ENCODE measurements at regions of chr16 and their contacts with region 1.

Region 1: GRCh38 chr16:4271176-4272066 is 1.4 kb downstream of the TFAP4 start:
- DNase-seq: peak; percentile 74 to 93 (median 86)
- ATAC-seq: peak; percentile 81
- H3K4me3 ChIP-seq: peak overlapping the region; percentile 100
- H3K4me3 Mint-ChIP-seq: peak overlapping the region; percentile 89
- H3K27ac ChIP-seq: peak overlapping the region; percentile 68 to 72
- H3K27ac Mint-ChIP-seq: peak overlapping the region; percentile 97
- H3K4me1 ChIP-seq: peaks cover 25% of the 10 kb centered on the region
- H3K4me1 Mint-ChIP-seq: peaks cover 11% of the 10 kb centered on the region
- H3K27me3 ChIP-seq: no peaks in the 10 kb centered on the region
- H3K27me3 Mint-ChIP-seq: peaks cover 5% of the 10 kb centered on the region
- CTCF ChIP-seq: no peak

Region 2: DNA sequence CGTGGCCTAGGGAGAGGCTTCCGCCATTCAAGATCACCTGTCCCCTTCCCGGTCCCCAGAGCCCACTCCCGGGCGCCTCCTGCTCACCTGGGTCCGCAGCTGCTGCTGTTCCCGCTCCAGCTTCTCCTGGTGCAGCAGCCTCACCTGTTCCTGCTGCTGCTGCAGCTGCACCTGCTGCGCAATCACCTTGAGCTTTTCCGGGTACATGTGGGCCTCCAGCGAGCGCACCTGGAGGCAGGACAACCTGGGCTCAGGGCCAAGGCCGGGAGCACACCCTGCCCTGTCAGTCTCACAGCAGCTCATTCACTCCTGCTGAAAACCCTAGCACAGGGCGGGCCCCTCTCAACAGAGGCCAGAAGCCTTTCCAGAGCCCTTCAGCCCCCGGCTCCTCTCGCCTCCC is 11.1 kb before region 1 on chr16:
- CTCF ChIA-PET with region 1: interaction called, 5 read pairs
- POLR2A ChIA-PET with region 1: interaction called, 179 read pairs
- intact Hi-C with region 1: no loop called
- DNase-seq: no peak
- ATAC-seq: no peak
- H3K4me3 ChIP-seq: no peak overlapping the region
- H3K4me3 Mint-ChIP-seq: no peak overlapping the region
- H3K27ac ChIP-seq: no peak overlapping the region
- H3K27ac Mint-ChIP-seq: no peak overlapping the region
- H3K4me1 ChIP-seq: peaks cover 2% of the 10 kb centered on the region
- H3K4me1 Mint-ChIP-seq: peaks cover 8% of the 10 kb centered on the region
- H3K27me3 ChIP-seq: no peaks in the 10 kb centered on the region
- H3K27me3 Mint-ChIP-seq: no peaks in the 10 kb centered on the region
- CTCF ChIP-seq: no peak

Region 3: DNA sequence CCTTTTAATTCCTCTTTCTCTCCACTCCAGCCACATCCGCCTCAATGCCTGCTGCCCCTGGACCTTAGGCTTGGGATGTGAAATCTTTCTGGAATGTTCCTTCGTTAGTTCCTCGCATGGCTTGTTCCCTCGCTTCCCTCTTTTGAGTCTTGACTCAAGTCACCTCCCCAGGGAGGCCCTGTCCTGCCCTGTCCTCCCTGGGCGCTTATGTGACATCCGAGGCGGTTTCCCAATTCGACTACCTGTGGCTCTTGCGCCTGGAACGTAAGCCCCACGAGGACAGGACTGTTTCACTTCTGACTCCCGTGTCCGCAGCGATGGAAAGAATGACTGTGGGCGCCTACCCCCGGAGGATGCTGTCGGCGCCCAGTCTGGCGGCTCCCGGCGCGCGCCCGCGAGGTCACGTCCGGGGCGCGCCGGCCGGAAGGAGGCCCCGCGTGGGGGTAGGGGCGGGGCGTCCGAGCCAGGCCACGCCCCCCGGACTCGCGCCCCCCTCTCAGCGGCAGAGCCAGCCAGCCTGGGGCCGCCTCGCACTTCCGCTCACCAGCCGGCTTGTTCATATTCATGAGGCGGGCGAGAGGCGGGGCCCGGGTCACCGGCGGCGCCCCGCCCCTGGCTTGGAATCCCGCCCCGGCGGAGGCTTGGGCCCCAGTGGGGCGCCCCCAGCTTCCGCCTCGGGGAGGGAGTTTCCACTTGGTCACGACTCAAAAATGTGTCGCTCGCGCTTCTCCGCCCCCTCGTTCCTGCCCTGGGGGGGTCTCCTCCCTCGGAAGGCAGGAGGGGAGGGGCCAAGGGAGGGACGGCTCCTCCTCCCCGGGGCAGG is 36.0 kb after region 1 on chr16:
- CTCF ChIA-PET with region 1: interaction called, 12 read pairs
- POLR2A ChIA-PET with region 1: interaction called, 48 read pairs
- intact Hi-C with region 1: loop called (anchors 2 to 5 kb)
- DNase-seq: peak; percentile 91 to 99 (median 96)
- ATAC-seq: peak; percentile 87
- H3K4me3 ChIP-seq: peak overlapping the region; percentile 72
- H3K4me3 Mint-ChIP-seq: peak overlapping the region; percentile 84
- H3K27ac ChIP-seq: peak overlapping the region; percentile 82 to 90
- H3K27ac Mint-ChIP-seq: peak overlapping the region; percentile 96
- H3K4me1 ChIP-seq: peaks cover 31% of the 10 kb centered on the region
- H3K4me1 Mint-ChIP-seq: peaks cover 15% of the 10 kb centered on the region
- H3K27me3 ChIP-seq: no peaks in the 10 kb centered on the region
- H3K27me3 Mint-ChIP-seq: no peaks in the 10 kb centered on the region
- CTCF ChIP-seq: no peak

Region 4: DNA sequence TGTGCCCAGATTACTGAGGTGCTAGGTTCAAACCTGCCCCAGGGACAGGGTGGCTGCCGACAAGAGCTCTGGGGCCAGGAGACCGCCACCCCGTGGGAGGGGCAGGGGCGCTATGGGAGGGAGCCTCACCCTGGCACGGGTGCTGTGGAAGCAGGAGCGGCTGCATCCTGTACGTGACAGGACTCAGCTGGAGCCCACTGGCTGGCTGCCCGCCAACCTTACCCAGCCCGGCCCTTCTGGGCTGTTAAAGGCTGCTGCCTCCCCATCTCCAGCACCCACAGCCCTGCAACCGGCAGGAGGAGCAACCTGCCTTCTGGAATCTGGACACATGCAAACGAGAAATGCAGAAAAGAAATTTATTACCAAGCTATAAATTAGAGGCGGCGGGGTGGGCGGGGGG is 68.5 kb after region 1 on chr16:
- CTCF ChIA-PET with region 1: no interaction called
- POLR2A ChIA-PET with region 1: no interaction called
- intact Hi-C with region 1: no loop called
- DNase-seq: no peak
- ATAC-seq: no peak
- H3K4me3 ChIP-seq: no peak overlapping the region
- H3K4me3 Mint-ChIP-seq: no peak overlapping the region
- H3K27ac ChIP-seq: no peak overlapping the region
- H3K27ac Mint-ChIP-seq: no peak overlapping the region
- H3K4me1 ChIP-seq: peaks cover 13% of the 10 kb centered on the region
- H3K4me1 Mint-ChIP-seq: peaks cover 3% of the 10 kb centered on the region
- H3K27me3 ChIP-seq: no peaks in the 10 kb centered on the region
- H3K27me3 Mint-ChIP-seq: no peaks in the 10 kb centered on the region
- CTCF ChIP-seq: no peak

Region 5: GRCh38 chr16:4350787-4351659 is 79.6 kb after region 1 on chr16 and contains the start of gene PAM16:
- CTCF ChIA-PET with region 1: no interaction called
- POLR2A ChIA-PET with region 1: interaction called, 10 read pairs
- intact Hi-C with region 1: loop called in 1 of 2 experiments (anchors 5 kb)
- DNase-seq: peak; percentile 95 to 100 (median 97)
- ATAC-seq: peak; percentile 85
- H3K4me3 ChIP-seq: peak within 1 kb of the TSS; percentile 96
- H3K4me3 Mint-ChIP-seq: peak within 1 kb of the TSS; percentile 98
- H3K27ac ChIP-seq: peak within 1 kb of the TSS; percentile 69 to 71
- H3K27ac Mint-ChIP-seq: peak within 1 kb of the TSS; percentile 94
- H3K4me1 ChIP-seq: peaks cover 42% of the 10 kb centered on the region
- H3K4me1 Mint-ChIP-seq: peaks cover 27% of the 10 kb centered on the region
- H3K27me3 ChIP-seq: no peaks in the 10 kb centered on the region
- H3K27me3 Mint-ChIP-seq: no peaks in the 10 kb centered on the region
- CTCF ChIP-seq: no peak
- total RNA-seq, gene PAM16: 24.9 to 26.8 TPM

Region 6: DNA sequence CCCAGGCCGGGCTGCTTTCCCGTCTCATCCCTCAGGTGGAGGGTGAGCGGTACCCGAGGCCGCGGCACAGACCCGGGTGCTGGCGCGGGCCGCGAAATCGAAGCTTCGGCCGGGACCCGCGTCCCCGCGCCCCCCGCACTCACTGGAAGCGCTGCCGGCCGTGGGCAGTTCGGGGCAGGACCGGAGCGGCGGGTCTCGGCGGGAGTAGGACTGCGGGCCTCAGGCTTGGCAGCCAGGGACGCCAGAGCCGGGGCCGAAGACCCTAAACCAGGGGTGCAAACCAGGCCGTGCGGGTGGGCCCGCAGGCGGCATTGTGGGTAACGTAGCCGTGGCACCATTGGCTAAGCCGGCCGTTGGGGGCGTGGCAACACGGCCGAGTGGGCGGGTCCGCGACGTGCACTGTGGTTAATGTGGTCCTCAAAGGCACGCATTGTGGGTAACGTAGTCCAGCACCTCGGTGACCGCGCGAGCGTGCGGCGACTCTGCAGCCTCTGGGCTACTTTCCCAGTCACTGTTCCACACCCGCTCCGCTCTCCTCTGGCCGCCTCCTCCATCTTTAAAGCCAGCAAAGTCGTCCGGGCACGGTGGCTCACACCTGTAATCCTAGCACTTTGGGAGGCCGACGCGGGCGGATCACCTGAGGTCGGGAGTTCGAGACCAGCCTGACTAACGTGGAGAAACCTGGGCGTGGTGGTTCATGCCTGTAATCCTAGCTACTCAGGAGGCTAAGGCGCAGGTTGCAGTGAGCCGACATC is 495.6 kb after region 1 on chr16 and contains the start of gene ZNF500:
- CTCF ChIA-PET with region 1: no interaction called
- POLR2A ChIA-PET with region 1: no interaction called
- intact Hi-C with region 1: loop called in 1 of 2 experiments (anchors 2 kb)
- DNase-seq: peak; percentile 90 to 99 (median 96)
- ATAC-seq: peak; percentile 90
- H3K4me3 ChIP-seq: peak within 1 kb of the TSS; percentile 80
- H3K4me3 Mint-ChIP-seq: peak within 1 kb of the TSS; percentile 96
- H3K27ac ChIP-seq: peak within 1 kb of the TSS; percentile 52 to 69
- H3K27ac Mint-ChIP-seq: peak within 1 kb of the TSS; percentile 90
- H3K4me1 ChIP-seq: peaks cover 41% of the 10 kb centered on the region
- H3K4me1 Mint-ChIP-seq: peaks cover 32% of the 10 kb centered on the region
- H3K27me3 ChIP-seq: no peaks in the 10 kb centered on the region
- H3K27me3 Mint-ChIP-seq: no peaks in the 10 kb centered on the region
- CTCF ChIP-seq: no peak
- total RNA-seq, gene ZNF500: 11.8 to 12.4 TPM